Activated CD4-positive, alpha-beta memory T cell treated with anti-CD3 and anti-CD28 coated beads for 36 hours (primary cell): ENCODE measurements at regions of chr5 and their contacts with region 1.

Region 1: GRCh38 chr5:91170266-91170665 is 212.9 kb downstream of the ARRDC3 start:
- DNase-seq: no peak
- H3K4me3 Mint-ChIP-seq: no peak overlapping the region
- H3K27ac Mint-ChIP-seq: peak overlapping the region; percentile 4
- H3K4me1 Mint-ChIP-seq: peaks cover 14% of the 10 kb centered on the region
- H3K27me3 Mint-ChIP-seq: peaks cover 9% of the 10 kb centered on the region

Region 2: DNA sequence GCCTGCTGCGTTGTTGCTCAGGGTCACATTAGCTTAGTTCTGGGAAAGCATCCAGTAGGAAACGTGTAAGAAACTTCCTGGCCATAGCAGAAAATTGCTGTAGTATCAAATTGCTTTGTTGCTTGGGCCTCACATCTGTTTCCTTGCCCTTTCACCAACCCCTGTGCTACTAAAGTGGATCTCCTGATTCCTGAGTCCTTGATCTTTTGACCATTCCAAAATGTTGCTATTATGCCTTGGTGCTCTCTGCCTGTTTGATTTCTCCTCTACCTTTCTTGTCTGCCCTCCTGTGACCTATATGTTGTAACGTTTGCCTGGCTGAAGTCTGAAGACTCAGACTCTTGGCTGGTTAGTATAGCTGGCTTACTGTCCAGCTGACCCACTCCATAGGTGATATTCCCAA is 261.2 kb before region 1 on chr5:
- CTCF ChIA-PET with region 1: no interaction called
- POLR2A ChIA-PET with region 1: no interaction called
- intact Hi-C with region 1: no loop called
- DNase-seq: no peak
- H3K4me3 Mint-ChIP-seq: no peak overlapping the region
- H3K27ac Mint-ChIP-seq: no peak overlapping the region
- H3K4me1 Mint-ChIP-seq: no peaks in the 10 kb centered on the region
- H3K27me3 Mint-ChIP-seq: peaks cover 7% of the 10 kb centered on the region

Region 3: GRCh38 chr5:90940227-90940995 is 229.9 kb before region 1 on chr5:
- CTCF ChIA-PET with region 1: no interaction called
- POLR2A ChIA-PET with region 1: no interaction called
- intact Hi-C with region 1: loop called (anchors 2 kb)
- DNase-seq: peak; percentile 75
- H3K4me3 Mint-ChIP-seq: no peak overlapping the region
- H3K27ac Mint-ChIP-seq: peak overlapping the region; percentile 32
- H3K4me1 Mint-ChIP-seq: peaks cover 7% of the 10 kb centered on the region
- H3K27me3 Mint-ChIP-seq: no peaks in the 10 kb centered on the region

Region 4: GRCh38 chr5:91059409-91059808 is 110.9 kb before region 1 on chr5:
- CTCF ChIA-PET with region 1: no interaction called
- POLR2A ChIA-PET with region 1: no interaction called
- intact Hi-C with region 1: loop called (anchors 2 kb)
- DNase-seq: no peak
- H3K4me3 Mint-ChIP-seq: no peak overlapping the region
- H3K27ac Mint-ChIP-seq: no peak overlapping the region
- H3K4me1 Mint-ChIP-seq: peaks cover 19% of the 10 kb centered on the region
- H3K27me3 Mint-ChIP-seq: peaks cover 26% of the 10 kb centered on the region

Region 5: GRCh38 chr5:91219803-91220371 is 49.6 kb after region 1 on chr5:
- CTCF ChIA-PET with region 1: interaction called, 3 read pairs
- POLR2A ChIA-PET with region 1: no interaction called
- intact Hi-C with region 1: loop called (anchors 2 kb)
- DNase-seq: peak; percentile 50
- H3K4me3 Mint-ChIP-seq: no peak overlapping the region
- H3K27ac Mint-ChIP-seq: no peak overlapping the region
- H3K4me1 Mint-ChIP-seq: no peaks in the 10 kb centered on the region
- H3K27me3 Mint-ChIP-seq: peaks cover 2% of the 10 kb centered on the region